Activated T-helper 2 cell treated with anti-CD3 and anti-CD28 coated beads, Interferon-gamma antibody, Interleukin-2, Interleukin-4, amounts not matched to agents 10 μg/mL and 5 μg/mL and 100 μg/mL, durations not matched to agents 14 hours and 24 hours and 36 hours (primary cell): ENCODE measurements at regions of chr15 and their contacts with region 1.

Region 1: GRCh38 chr15:68550481-68551295 is 28.1 kb upstream of the CORO2B start:
- DNase-seq: peak; percentile 57
- H3K4me3 Mint-ChIP-seq: no peak overlapping the region
- H3K27ac Mint-ChIP-seq: no peak overlapping the region
- H3K4me1 Mint-ChIP-seq: peaks cover 9% of the 10 kb centered on the region
- H3K27me3 Mint-ChIP-seq: peaks cover 31% of the 10 kb centered on the region

Region 2: DNA sequence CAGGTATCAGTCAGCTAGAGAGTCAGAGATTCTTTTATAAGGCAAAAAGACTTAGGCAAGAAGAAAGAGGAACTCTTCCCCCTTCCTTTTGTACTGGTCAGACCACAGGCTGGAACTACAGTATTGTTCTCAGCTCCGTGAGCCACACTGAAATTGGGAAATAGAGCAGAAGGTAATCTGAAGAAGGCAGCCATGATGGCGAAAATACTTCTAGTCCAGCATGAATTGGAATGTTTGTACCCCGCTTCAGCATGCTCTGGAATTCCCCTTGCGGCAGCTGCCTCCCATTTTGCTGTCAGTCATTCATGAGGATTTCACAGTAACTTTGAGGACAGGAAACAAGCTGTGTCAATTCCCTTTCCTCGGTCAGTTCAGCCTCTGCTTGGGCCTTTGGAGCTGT is 124.3 kb after region 1 on chr15:
- intact Hi-C with region 1: loop called (anchors 1 kb)
- DNase-seq: no peak
- H3K4me3 Mint-ChIP-seq: no peak overlapping the region
- H3K27ac Mint-ChIP-seq: no peak overlapping the region
- H3K4me1 Mint-ChIP-seq: no peaks in the 10 kb centered on the region
- H3K27me3 Mint-ChIP-seq: peaks cover 10% of the 10 kb centered on the region

Region 3: GRCh38 chr15:68924866-68925560 is 374.3 kb after region 1 on chr15:
- intact Hi-C with region 1: loop called (anchors 5 kb)
- DNase-seq: peak; percentile 32
- H3K4me3 Mint-ChIP-seq: no peak overlapping the region
- H3K27ac Mint-ChIP-seq: no peak overlapping the region
- H3K4me1 Mint-ChIP-seq: no peaks in the 10 kb centered on the region
- H3K27me3 Mint-ChIP-seq: peaks cover 14% of the 10 kb centered on the region